ENCODE measurements at regions of chr3 and their contacts with region 1.

Region 1: GRCh38 chr3:179147873-179148615 is at the start of gene PIK3CA:
- DNase-seq: peak; percentile 98
- H3K4me3 ChIP-seq: peak within 1 kb of the TSS; percentile 94 to 99 (median 99)
- H3K4me3 Mint-ChIP-seq: peak within 1 kb of the TSS; percentile 93 to 96
- H3K27ac ChIP-seq: peak within 1 kb of the TSS; percentile 91 to 96
- H3K27ac Mint-ChIP-seq: peak within 1 kb of the TSS in 6 of 7 donors; percentile 79 to 93 (median 90)
- H3K4me1 ChIP-seq: peaks cover 14 to 15% of the 10 kb centered on the region in 2 donors
- H3K4me1 Mint-ChIP-seq: peaks cover 29% of the 10 kb centered on the region
- H3K27me3 ChIP-seq: peaks cover 0 to 5% of the 10 kb centered on the region in 2 donors
- H3K27me3 Mint-ChIP-seq: peaks cover 4 to 8% (median 7%) of the 10 kb centered on the region in 3 donors
- CTCF ChIP-seq: no peak
- polyA plus RNA-seq, gene PIK3CA: 7.4 to 9.5 (median 9.4) TPM

Region 2: GRCh38 chr3:179098388-179099077 is 49.5 kb before region 1 on chr3:
- intact Hi-C with region 1: no loop called
- DNase-seq: no peak
- H3K4me3 ChIP-seq: no peak overlapping the region
- H3K4me3 Mint-ChIP-seq: no peak overlapping the region
- H3K27ac ChIP-seq: no peak overlapping the region
- H3K27ac Mint-ChIP-seq: no peak overlapping the region
- H3K4me1 ChIP-seq: no peaks in the 10 kb centered on the region
- H3K4me1 Mint-ChIP-seq: no peaks in the 10 kb centered on the region
- H3K27me3 ChIP-seq: no peaks in the 10 kb centered on the region
- H3K27me3 Mint-ChIP-seq: peaks cover 0 to 1% (median 0%) of the 10 kb centered on the region in 3 donors
- CTCF ChIP-seq: no peak

Region 3: GRCh38 chr3:179181021-179181472 is 33.0 kb after region 1 on chr3:
- intact Hi-C with region 1: loop called in 1 of 2 experiments (anchors 5 kb)
- DNase-seq: peak in 1 of 3 donors; percentile 10
- H3K4me3 ChIP-seq: no peak overlapping the region
- H3K4me3 Mint-ChIP-seq: no peak overlapping the region
- H3K27ac ChIP-seq: no peak overlapping the region
- H3K27ac Mint-ChIP-seq: no peak overlapping the region
- H3K4me1 ChIP-seq: peaks cover 9 to 28% of the 10 kb centered on the region in 2 donors
- H3K4me1 Mint-ChIP-seq: peaks cover 30% of the 10 kb centered on the region
- H3K27me3 ChIP-seq: no peaks in the 10 kb centered on the region
- H3K27me3 Mint-ChIP-seq: no peaks in the 10 kb centered on the region
- CTCF ChIP-seq: no peak

Region 4: GRCh38 chr3:179322286-179323196 is 174.5 kb after region 1 on chr3 and contains the start of gene ZNF639:
- intact Hi-C with region 1: loop called in 1 of 2 experiments (anchors 5 kb)
- DNase-seq: peak; percentile 67 to 72 (median 71)
- H3K4me3 ChIP-seq: peak within 1 kb of the TSS; percentile 54 to 94 (median 92)
- H3K4me3 Mint-ChIP-seq: peak within 1 kb of the TSS; percentile 86 to 95
- H3K27ac ChIP-seq: peak within 1 kb of the TSS; percentile 75 to 87
- H3K27ac Mint-ChIP-seq: peak within 1 kb of the TSS; percentile 75 to 91 (median 81)
- H3K4me1 ChIP-seq: peaks cover 18 to 35% of the 10 kb centered on the region in 2 donors
- H3K4me1 Mint-ChIP-seq: peaks cover 31% of the 10 kb centered on the region
- H3K27me3 ChIP-seq: no peaks in the 10 kb centered on the region
- H3K27me3 Mint-ChIP-seq: peaks cover 2 to 7% (median 5%) of the 10 kb centered on the region in 3 donors
- CTCF ChIP-seq: peak; percentile 96
- polyA plus RNA-seq, gene ZNF639: 9.4 to 17.9 (median 17.7) TPM

Region 5: GRCh38 chr3:179347345-179348194 is 199.5 kb after region 1 on chr3 and contains the start of gene MFN1:
- intact Hi-C with region 1: loop called (anchors 5 to 10 kb)
- DNase-seq: peak; percentile 86 to 93 (median 90)
- H3K4me3 ChIP-seq: peak within 1 kb of the TSS; percentile 59 to 95 (median 69)
- H3K4me3 Mint-ChIP-seq: peak within 1 kb of the TSS; percentile 97 to 98
- H3K27ac ChIP-seq: peak within 1 kb of the TSS; percentile 45 to 85
- H3K27ac Mint-ChIP-seq: peak within 1 kb of the TSS; percentile 94 to 99 (median 96)
- H3K4me1 ChIP-seq: peaks cover 15 to 22% of the 10 kb centered on the region in 2 donors
- H3K4me1 Mint-ChIP-seq: peaks cover 11% of the 10 kb centered on the region
- H3K27me3 ChIP-seq: no peaks in the 10 kb centered on the region
- H3K27me3 Mint-ChIP-seq: peaks cover 2 to 4% (median 4%) of the 10 kb centered on the region in 3 donors
- CTCF ChIP-seq: no peak
- polyA plus RNA-seq, gene MFN1: 5.6 to 15.2 (median 12.2) TPM

Region 6: DNA sequence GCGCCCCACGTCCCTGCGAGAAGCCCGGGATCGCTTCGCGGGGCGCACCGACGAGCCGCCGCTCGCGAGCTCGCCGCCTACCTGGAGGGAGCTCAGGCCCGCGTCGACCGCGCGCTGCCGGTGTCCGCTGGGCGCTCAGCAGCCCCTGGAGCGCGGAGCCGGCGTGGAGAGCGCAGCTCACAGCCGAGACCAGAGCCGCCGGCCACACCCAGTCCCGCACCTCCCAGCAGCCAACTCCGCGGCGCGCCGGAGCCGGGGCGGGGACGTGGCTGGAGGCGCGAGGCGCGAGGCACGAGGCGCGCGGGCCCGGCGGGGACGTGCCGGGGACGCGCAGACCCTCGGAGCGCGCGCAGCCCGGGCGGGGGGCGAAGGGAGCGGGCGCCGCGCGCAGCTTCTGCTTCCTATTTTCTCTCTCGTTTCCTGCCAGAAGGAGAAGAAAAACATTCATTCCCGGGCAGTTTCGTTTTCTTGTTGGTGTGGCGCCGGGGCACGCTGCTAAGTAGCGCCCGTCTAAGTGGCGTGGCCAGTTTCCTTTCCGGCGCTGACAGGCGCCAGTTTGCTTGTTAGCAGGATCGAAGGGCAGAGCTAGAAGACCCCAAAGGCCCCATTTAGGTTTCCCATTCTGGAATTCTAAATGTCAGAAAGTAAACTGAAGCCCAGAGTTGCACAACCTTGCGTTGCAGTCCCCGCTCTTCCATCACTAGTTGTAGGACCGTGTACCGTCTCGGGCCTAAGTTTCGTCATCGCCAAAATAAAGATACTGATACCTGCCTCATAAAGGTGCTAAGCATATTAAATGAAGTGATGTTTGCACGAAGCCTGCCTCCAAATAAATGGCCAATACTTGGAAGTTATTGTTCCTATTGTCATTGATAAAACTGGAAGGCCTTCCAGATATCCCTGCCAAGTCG is 303.5 kb after region 1 on chr3 and contains the start of gene GNB4:
- intact Hi-C with region 1: loop called in 1 of 2 experiments (anchors 10 kb)
- DNase-seq: peak; percentile 88 to 91 (median 88)
- H3K4me3 ChIP-seq: peak within 1 kb of the TSS; percentile 77 to 99 (median 87)
- H3K4me3 Mint-ChIP-seq: peak within 1 kb of the TSS; percentile 89 to 91
- H3K27ac ChIP-seq: peak within 1 kb of the TSS; percentile 89 to 92
- H3K27ac Mint-ChIP-seq: peak within 1 kb of the TSS; percentile 88 to 97 (median 95)
- H3K4me1 ChIP-seq: peaks cover 22 to 25% of the 10 kb centered on the region in 2 donors
- H3K4me1 Mint-ChIP-seq: peaks cover 38% of the 10 kb centered on the region
- H3K27me3 ChIP-seq: no peaks in the 10 kb centered on the region
- H3K27me3 Mint-ChIP-seq: peaks cover 0 to 4% (median 0%) of the 10 kb centered on the region in 3 donors
- CTCF ChIP-seq: no peak
- polyA plus RNA-seq, gene GNB4: 15.4 to 65.1 (median 63.5) TPM